ENCODE measurements at regions of chr14 and their contacts with region 1.

Region 1: GRCh38 chr14:31420319-31421111 is at the start of gene HEATR5A:
- DNase-seq: peak; percentile 87 to 95 (median 88)
- ATAC-seq: peak; percentile 96
- H3K4me3 ChIP-seq: peak within 1 kb of the TSS; percentile 98
- H3K27ac ChIP-seq: peak within 1 kb of the TSS; percentile 99
- H3K4me1 ChIP-seq: peaks cover 6 to 8% of the 10 kb centered on the region in 2 experiments; a peak in 3 of 5 replicates
- H3K27me3 ChIP-seq: no peaks in the 10 kb centered on the region
- CTCF ChIP-seq: peak; percentile 7 to 43 (median 31); a peak in 4 of 6 replicates
- EP300 ChIP-seq: peak; percentile 38; the same call in 1 of the 2 replicates
- POLR2A ChIP-seq: peak; percentile 95
- RAD21 ChIP-seq: no peak
- polyA plus RNA-seq, gene HEATR5A: 46.4 to 50.9 TPM

Region 2: DNA sequence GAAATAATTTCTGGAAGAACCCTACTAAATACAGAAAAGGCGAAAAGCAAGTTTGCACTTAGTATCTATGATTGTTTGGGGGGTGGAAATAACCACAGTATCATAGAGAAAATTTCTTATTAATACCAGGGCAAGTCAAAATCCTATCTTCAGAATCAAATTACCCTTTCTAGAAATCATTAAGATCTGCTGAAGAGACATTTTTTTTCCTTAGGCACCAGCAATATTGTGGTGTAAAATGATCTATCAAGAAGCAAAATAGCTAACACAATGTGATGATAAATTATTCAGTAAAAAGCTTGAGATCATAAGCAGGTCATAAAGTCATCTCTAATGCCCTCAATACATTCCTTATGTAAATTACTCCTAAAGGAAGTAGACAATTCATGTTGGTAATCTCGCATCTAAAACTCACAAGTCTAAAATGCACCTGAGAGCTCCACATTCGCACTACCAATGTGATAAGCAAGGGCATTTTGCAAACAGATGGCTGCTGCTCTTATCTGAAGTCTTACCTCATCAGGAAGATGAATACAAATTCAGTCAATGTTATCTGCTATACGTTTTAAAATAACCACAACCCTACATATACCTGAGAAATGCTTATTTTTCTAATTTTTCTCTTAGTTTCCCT is 14.8 kb before region 1 on chr14:
- CTCF ChIA-PET with region 1: no interaction called
- POLR2A ChIA-PET with region 1: interaction called, 10 read pairs
- in situ Hi-C with region 1: no loop called
- intact Hi-C with region 1: no loop called
- DNase-seq: peak in 1 of 4 experiments; percentile 17
- ATAC-seq: no peak
- H3K4me3 ChIP-seq: no peak overlapping the region
- H3K27ac ChIP-seq: no peak overlapping the region
- H3K4me1 ChIP-seq: peaks cover 0 to 3% of the 10 kb centered on the region in 2 experiments; a peak in 3 of 5 replicates
- H3K27me3 ChIP-seq: no peaks in the 10 kb centered on the region
- CTCF ChIP-seq: no peak
- EP300 ChIP-seq: no peak
- POLR2A ChIP-seq: no peak
- RAD21 ChIP-seq: no peak